WTC11 (cell line): ENCODE measurements at regions of chr2 and their contacts with region 1.

Region 1: GRCh38 chr2:134245340-134245984 is 8.4 kb upstream of the MGAT5 start:
- DNase-seq: peak; percentile 80
- ATAC-seq: peak; percentile 81
- H3K4me3 Mint-ChIP-seq: no peak overlapping the region
- H3K27ac Mint-ChIP-seq: no peak overlapping the region
- H3K4me1 Mint-ChIP-seq: peaks cover 23% of the 10 kb centered on the region
- H3K27me3 Mint-ChIP-seq: no peaks in the 10 kb centered on the region
- CTCF ChIP-seq: peak; percentile 85

Region 2: DNA sequence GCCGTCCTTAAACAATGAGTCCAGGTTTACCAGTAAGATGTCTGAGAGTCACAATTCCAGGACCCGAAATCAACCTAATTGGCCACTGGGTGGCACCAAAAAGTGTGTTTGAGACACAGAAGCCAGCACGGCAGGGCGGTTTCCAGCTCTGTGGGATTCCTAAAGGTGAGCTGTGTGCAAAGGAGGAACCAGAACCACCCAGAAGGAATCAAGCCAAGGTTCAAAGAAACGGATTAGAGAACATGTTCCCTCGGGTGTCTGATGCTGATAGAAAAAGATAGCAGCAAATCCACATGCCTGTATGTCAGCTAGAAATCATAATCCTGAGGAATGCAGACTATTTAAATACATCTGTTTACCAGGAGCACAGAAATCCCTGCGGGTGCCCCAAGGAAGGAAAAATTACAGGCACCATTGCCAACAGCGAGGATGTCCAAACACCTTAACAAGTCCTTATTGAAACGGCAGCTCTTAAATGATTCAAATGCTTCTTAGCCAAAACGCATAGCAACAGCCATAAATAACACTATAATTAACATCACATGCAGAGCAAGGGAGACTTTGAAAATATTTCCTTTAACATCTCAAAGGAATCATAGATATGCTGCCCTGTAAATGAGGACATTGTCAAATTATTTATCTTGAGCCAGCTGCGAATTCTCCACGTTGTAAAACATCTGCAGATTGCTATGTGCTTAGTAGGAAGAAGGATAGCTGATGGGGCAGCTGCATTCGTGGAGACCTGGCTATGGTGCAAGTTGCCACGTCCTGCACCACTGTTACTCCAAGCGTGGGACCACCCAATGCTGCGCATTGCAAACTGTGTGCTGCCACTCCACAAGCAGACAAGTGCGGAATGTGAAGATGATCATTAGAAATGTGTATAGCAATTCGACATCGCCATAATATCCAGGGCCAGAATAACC is 358.5 kb before region 1 on chr2:
- CTCF ChIA-PET with region 1: interaction called, 16 read pairs
- POLR2A ChIA-PET with region 1: no interaction called
- DNase-seq: peak; percentile 75
- ATAC-seq: peak; percentile 88
- H3K4me3 Mint-ChIP-seq: no peak overlapping the region
- H3K27ac Mint-ChIP-seq: no peak overlapping the region
- H3K4me1 Mint-ChIP-seq: peaks cover 18% of the 10 kb centered on the region
- H3K27me3 Mint-ChIP-seq: no peaks in the 10 kb centered on the region; the same call in none of the 2 replicates
- CTCF ChIP-seq: peak; percentile 32; the same call in 1 of the 2 replicates

Region 3: GRCh38 chr2:134039912-134040581 is 205.4 kb before region 1 on chr2:
- CTCF ChIA-PET with region 1: no interaction called
- POLR2A ChIA-PET with region 1: no interaction called
- DNase-seq: no peak
- ATAC-seq: no peak
- H3K4me3 Mint-ChIP-seq: no peak overlapping the region
- H3K27ac Mint-ChIP-seq: no peak overlapping the region
- H3K4me1 Mint-ChIP-seq: no peaks in the 10 kb centered on the region
- H3K27me3 Mint-ChIP-seq: peaks cover 3% of the 10 kb centered on the region
- CTCF ChIP-seq: no peak

Region 4: GRCh38 chr2:134234535-134234934 is 10.9 kb before region 1 on chr2:
- CTCF ChIA-PET with region 1: interaction called, 17 read pairs
- POLR2A ChIA-PET with region 1: no interaction called
- DNase-seq: no peak
- ATAC-seq: no peak
- H3K4me3 Mint-ChIP-seq: no peak overlapping the region
- H3K27ac Mint-ChIP-seq: no peak overlapping the region
- H3K4me1 Mint-ChIP-seq: peaks cover 9% of the 10 kb centered on the region
- H3K27me3 Mint-ChIP-seq: no peaks in the 10 kb centered on the region
- CTCF ChIP-seq: no peak

Region 5: GRCh38 chr2:134261398-134262131 is 16.1 kb after region 1 on chr2:
- CTCF ChIA-PET with region 1: interaction called, 18 read pairs
- POLR2A ChIA-PET with region 1: no interaction called
- DNase-seq: no peak
- ATAC-seq: peak; percentile 65
- H3K4me3 Mint-ChIP-seq: no peak overlapping the region
- H3K27ac Mint-ChIP-seq: no peak overlapping the region
- H3K4me1 Mint-ChIP-seq: peaks cover 33% of the 10 kb centered on the region
- H3K27me3 Mint-ChIP-seq: no peaks in the 10 kb centered on the region
- CTCF ChIP-seq: no peak

Region 6: GRCh38 chr2:134411828-134412638 is 166.6 kb after region 1 on chr2:
- CTCF ChIA-PET with region 1: interaction called, 15 read pairs
- POLR2A ChIA-PET with region 1: no interaction called
- DNase-seq: peak; percentile 64
- ATAC-seq: peak; percentile 97
- H3K4me3 Mint-ChIP-seq: no peak overlapping the region
- H3K27ac Mint-ChIP-seq: no peak overlapping the region
- H3K4me1 Mint-ChIP-seq: peaks cover 13% of the 10 kb centered on the region
- H3K27me3 Mint-ChIP-seq: no peaks in the 10 kb centered on the region
- CTCF ChIP-seq: 0 out of 2 replicates have a peak, but pooled peaks have one; percentile 28